ENCODE measurements at regions of chr10 and their contacts with region 1.

Region 1: DNA sequence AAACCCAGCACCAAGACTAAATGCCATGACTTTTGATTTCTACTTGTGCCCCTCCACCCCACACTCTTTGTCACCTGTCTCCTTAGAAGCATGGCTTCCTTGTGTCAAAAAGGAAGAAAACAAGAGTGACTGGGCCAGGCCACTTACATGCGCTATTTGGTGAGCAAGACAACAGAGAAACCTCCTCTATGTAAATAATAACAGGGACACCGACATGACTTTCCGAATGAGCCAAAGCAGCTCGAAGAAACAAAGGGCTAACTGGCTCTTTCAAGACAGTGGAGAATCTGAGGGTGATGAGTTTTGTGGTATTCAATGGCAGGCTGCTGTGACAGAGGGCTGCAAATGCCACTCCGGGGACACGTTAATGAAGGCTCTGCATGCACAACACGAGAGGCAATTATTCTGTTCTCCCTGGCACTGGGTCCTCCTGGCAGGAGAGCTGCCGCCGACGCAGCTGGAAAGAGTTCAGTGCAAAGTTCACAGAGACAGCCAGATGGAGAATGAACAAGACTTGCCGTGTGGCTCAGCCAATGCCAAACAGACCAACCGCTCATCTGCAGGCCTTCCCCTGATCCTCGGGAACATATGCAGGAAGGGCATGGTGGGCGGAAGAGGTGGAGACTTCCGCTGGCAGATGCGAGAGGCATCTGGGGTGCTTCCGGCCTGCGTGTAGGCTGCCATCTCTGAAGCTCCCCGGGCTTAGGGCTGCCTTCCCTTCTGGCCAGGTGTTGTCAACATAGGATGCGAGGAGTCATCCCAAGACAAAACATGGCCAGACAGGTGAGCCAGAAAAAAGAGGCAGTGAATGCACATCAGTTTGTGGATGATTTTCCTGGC is 59.1 kb upstream of the SMNDC1 start:
- DNase-seq: peak; percentile 84
- H3K4me3 Mint-ChIP-seq: peak overlapping the region; percentile 83
- H3K27ac Mint-ChIP-seq: peak overlapping the region; percentile 98
- H3K4me1 Mint-ChIP-seq: peaks cover 86% of the 10 kb centered on the region
- H3K27me3 Mint-ChIP-seq: no peaks in the 10 kb centered on the region

Region 2: GRCh38 chr10:110395725-110396651 is 32.2 kb after region 1 on chr10:
- CTCF ChIA-PET with region 1: no interaction called
- POLR2A ChIA-PET with region 1: interaction called, 3 read pairs
- intact Hi-C with region 1: loop called (anchors 1 kb)
- DNase-seq: peak; percentile 86
- H3K4me3 Mint-ChIP-seq: no peak overlapping the region
- H3K27ac Mint-ChIP-seq: peak overlapping the region; percentile 79
- H3K4me1 Mint-ChIP-seq: peaks cover 48% of the 10 kb centered on the region
- H3K27me3 Mint-ChIP-seq: no peaks in the 10 kb centered on the region

Region 3: GRCh38 chr10:111015176-111015575 is 651.4 kb after region 1 on chr10:
- CTCF ChIA-PET with region 1: no interaction called
- POLR2A ChIA-PET with region 1: no interaction called
- intact Hi-C with region 1: no loop called
- DNase-seq: no peak
- H3K4me3 Mint-ChIP-seq: no peak overlapping the region
- H3K27ac Mint-ChIP-seq: no peak overlapping the region
- H3K4me1 Mint-ChIP-seq: peaks cover 8% of the 10 kb centered on the region
- H3K27me3 Mint-ChIP-seq: no peaks in the 10 kb centered on the region

Measured in activated CD4-positive, alpha-beta memory T cell treated with anti-CD3 and anti-CD28 coated beads for 36 hours (primary cell).